ENCODE measurements at regions of chr3 and their contacts with region 1.

Region 1: GRCh38 chr3:130093741-130094391 is 12.2 kb downstream of the ALG1L2 start:
- DNase-seq: no peak
- H3K4me3 ChIP-seq: peak overlapping the region in 2 of 4 donors; percentile 11 to 28
- H3K27ac ChIP-seq: peak overlapping the region; percentile 54 to 75 (median 74)
- H3K4me1 ChIP-seq: peaks cover 4 to 39% (median 20%) of the 10 kb centered on the region in 3 donors
- H3K27me3 ChIP-seq: peaks cover 0 to 2% (median 0%) of the 10 kb centered on the region in 4 donors
- CTCF ChIP-seq: no peak
- POLR2A ChIP-seq: no peak

Region 2: DNA sequence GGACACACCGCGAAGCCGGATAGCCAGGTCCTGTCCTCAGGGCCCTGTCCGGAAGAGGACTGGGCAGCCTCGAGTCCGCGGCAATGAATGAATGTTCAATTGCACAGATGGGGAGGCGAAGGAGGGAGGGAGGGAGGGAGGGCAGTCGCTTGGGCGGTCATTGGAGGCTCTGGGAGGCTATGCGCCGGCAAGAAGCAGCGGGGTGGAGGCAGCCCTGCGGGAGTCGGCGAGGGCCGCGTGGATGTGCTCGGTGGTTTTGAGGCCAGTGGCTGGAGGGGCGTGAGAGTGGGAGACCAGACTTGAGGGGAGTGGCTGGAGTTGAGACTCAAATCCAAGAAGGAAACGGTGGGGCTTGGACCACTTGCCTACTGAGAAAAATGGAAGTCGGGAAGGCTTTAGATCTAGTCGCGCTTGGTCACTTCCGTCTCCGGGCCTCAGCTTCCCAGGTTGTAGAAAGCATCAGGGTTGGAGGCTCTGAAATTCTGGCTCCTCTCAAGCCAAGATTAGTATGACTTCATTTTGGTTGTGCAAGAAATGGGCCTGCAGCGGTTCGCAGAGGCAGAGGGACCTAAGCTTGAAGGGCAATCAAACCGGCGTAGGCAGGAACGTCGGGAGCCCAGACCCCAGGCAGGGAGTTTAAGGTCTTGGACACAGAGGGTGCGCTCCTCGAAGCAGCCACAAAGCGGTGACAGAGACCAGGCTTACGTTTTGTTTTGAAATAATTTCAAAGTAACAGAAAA is 466.3 kb before region 1 on chr3:
- intact Hi-C with region 1: loop called (anchors 10 kb)
- DNase-seq: peak; percentile 46
- H3K4me3 ChIP-seq: peak overlapping the region; percentile 52 to 74 (median 62)
- H3K27ac ChIP-seq: peak overlapping the region; percentile 89 to 98 (median 94)
- H3K4me1 ChIP-seq: peaks cover 39 to 65% (median 46%) of the 10 kb centered on the region in 3 donors
- H3K27me3 ChIP-seq: no peaks in the 10 kb centered on the region
- CTCF ChIP-seq: peak; percentile 63 to 90 (median 83)
- POLR2A ChIP-seq: peak in 1 of 4 donors; percentile 32

Region 3: DNA sequence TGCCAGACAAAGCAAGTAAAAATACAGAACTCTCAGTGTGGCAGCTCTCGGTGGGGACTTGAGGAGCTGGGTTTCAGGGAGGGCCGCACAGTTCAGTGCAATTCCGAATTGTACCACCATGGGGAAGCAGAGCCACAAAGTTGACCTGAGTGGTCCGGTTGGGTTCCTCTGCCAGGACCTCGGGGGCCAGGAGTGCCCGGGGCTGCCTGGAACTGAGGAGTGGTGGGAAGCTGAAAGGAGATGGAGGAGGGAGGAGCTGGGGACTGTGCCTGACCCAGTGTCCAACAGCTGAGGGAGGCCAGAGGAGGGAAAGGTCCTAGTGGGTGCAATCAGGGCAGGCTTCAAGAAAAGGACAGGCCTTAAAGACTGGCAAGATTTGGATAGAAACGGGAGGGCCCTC is 151.6 kb before region 1 on chr3:
- intact Hi-C with region 1: loop called (anchors 10 kb)
- DNase-seq: no peak
- H3K4me3 ChIP-seq: no peak overlapping the region
- H3K27ac ChIP-seq: no peak overlapping the region
- H3K4me1 ChIP-seq: peaks cover 0 to 2% (median 0%) of the 10 kb centered on the region in 3 donors
- H3K27me3 ChIP-seq: peaks cover 0 to 6% (median 0%) of the 10 kb centered on the region in 4 donors
- CTCF ChIP-seq: peak; percentile 25 to 82 (median 68)
- POLR2A ChIP-seq: no peak